ENCODE measurements at regions of chr17 and their contacts with region 1.

Region 1: GRCh38 chr17:69117855-69118784 is 23.6 kb downstream of the ABCA6 start:
- DNase-seq: peak; percentile 47
- ATAC-seq: peak; percentile 60
- H3K4me3 ChIP-seq: peak overlapping the region; percentile 27
- H3K27ac ChIP-seq: peak overlapping the region; percentile 93
- H3K4me1 ChIP-seq: peaks cover 22% of the 10 kb centered on the region
- H3K27me3 ChIP-seq: no peaks in the 10 kb centered on the region
- CTCF ChIP-seq: no peak
- EP300 ChIP-seq: peak; percentile 49 to 53; a peak in 3 of 4 replicates
- POLR2A ChIP-seq: no peak
- RAD21 ChIP-seq: no peak

Region 2: DNA sequence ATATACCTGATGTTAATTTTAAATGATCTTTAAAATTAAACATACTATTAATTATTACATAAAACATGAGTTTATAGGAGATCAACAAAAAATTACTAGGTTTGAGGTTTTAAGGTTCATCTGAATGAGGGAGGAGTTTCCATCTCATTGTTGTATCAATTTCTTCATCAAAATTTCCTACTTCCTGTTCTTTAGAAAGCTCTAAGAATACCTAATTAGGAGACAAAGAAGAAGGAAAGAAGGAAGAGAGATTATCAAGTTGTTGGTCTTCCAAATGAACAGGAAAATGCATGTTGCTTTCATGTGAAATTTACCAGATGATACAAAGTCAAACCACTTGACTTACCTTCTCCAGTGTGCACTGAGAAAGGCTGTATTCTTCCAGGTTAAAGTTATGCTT is 39.3 kb before region 1 on chr17:
- CTCF ChIA-PET with region 1: no interaction called
- POLR2A ChIA-PET with region 1: no interaction called
- RAD21 ChIA-PET with region 1: no interaction called
- SMC1A ChIA-PET with region 1: no interaction called
- in situ Hi-C with region 1: no loop called
- intact Hi-C with region 1: no loop called
- DNase-seq: no peak
- ATAC-seq: no peak
- H3K4me3 ChIP-seq: no peak overlapping the region
- H3K27ac ChIP-seq: no peak overlapping the region
- H3K4me1 ChIP-seq: no peaks in the 10 kb centered on the region
- H3K27me3 ChIP-seq: no peaks in the 10 kb centered on the region
- CTCF ChIP-seq: no peak
- EP300 ChIP-seq: no peak
- POLR2A ChIP-seq: no peak
- RAD21 ChIP-seq: no peak

Region 3: GRCh38 chr17:69130627-69131296 is 12.6 kb after region 1 on chr17:
- CTCF ChIA-PET with region 1: interaction called, 3 read pairs
- POLR2A ChIA-PET with region 1: no interaction called
- RAD21 ChIA-PET with region 1: no interaction called
- SMC1A ChIA-PET with region 1: interaction called, 10 read pairs
- in situ Hi-C with region 1: no loop called
- intact Hi-C with region 1: no loop called
- DNase-seq: no peak
- ATAC-seq: no peak
- H3K4me3 ChIP-seq: no peak overlapping the region
- H3K27ac ChIP-seq: no peak overlapping the region
- H3K4me1 ChIP-seq: no peaks in the 10 kb centered on the region
- H3K27me3 ChIP-seq: no peaks in the 10 kb centered on the region
- CTCF ChIP-seq: no peak
- EP300 ChIP-seq: no peak
- POLR2A ChIP-seq: no peak
- RAD21 ChIP-seq: no peak

Region 4: DNA sequence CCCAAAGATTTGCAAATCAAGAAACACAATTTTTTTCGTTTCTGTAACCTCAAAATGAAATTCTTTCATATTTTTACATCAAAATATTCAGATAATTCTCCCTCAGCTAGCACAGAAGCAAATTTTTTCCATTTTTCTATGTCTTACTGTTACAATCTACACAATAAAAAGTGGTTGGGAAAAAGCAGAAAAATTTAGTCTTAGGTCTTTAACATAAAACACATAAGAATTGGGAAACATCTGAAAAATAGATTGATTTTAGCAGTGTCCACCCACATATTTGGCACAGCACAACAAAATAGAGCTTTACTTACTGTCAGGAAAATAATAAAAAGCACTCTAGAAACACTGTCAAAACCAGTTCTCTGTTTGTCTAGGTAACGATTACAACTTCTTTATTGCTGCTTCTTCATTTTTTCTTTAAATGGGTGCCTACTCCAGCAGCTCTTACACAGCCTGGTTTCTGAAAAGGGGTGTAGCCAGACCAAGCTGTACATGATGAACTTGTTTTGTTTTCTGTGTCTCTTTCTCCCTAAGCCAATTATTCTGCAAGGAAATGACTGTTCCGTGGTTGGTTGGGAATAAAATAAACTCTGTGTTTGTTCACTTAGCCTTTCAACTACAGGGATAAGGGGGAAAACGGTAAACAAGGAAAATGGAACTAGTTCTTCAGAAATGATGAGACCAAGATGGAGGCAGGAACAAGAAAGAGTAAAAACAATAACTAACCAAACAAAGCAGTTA is 23.5 kb after region 1 on chr17 and contains the start of gene ABCA6:
- CTCF ChIA-PET with region 1: no interaction called
- POLR2A ChIA-PET with region 1: no interaction called
- RAD21 ChIA-PET with region 1: no interaction called
- SMC1A ChIA-PET with region 1: no interaction called
- in situ Hi-C with region 1: no loop called
- intact Hi-C with region 1: no loop called
- DNase-seq: no peak
- ATAC-seq: no peak
- H3K4me3 ChIP-seq: no peak within 1 kb of the TSS
- H3K27ac ChIP-seq: no peak within 1 kb of the TSS
- H3K4me1 ChIP-seq: no peaks in the 10 kb centered on the region
- H3K27me3 ChIP-seq: no peaks in the 10 kb centered on the region
- CTCF ChIP-seq: no peak
- EP300 ChIP-seq: no peak
- POLR2A ChIP-seq: no peak
- RAD21 ChIP-seq: no peak
- polyA plus RNA-seq, gene ABCA6: 9.0 to 10.1 TPM

Region 5: DNA sequence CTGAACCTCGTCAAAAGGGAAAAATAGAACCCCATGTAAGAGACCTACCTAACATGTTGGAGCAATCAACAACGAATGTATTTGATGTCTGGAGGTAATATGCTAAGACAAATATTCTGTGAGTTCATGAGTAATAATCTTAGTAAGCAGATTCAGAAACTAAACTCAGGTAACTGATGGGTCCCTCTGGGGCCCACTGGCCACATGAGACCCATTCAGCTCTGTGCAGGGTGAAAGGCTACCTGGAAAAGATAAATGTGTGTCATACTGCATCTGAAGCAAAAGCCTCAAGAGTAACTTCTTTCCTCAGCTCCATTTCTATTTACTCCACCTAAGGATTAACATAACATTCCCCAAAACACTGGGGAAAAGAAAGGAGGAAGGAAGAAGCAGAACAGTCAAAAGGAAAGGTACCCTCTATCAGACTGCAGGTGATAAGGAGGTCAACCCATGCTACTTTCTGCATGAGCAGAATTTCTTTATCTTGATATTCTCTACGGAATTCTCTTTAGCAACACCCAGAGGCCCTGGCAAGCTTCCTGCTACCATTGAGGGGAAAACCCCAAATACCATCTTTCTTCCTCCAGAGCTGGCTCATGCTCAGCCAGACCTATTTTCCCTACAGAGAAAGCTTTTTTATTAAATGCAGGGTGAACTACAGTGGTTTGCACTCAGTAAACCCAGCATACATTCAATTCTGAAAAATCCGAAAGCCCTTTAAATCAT is 61.3 kb after region 1 on chr17:
- CTCF ChIA-PET with region 1: interaction called, 3 read pairs
- POLR2A ChIA-PET with region 1: interaction called, 4 read pairs
- RAD21 ChIA-PET with region 1: interaction called, 4 read pairs
- SMC1A ChIA-PET with region 1: interaction called, 12 read pairs
- in situ Hi-C with region 1: no loop called
- intact Hi-C with region 1: no loop called
- DNase-seq: no peak
- ATAC-seq: peak; percentile 78
- H3K4me3 ChIP-seq: no peak overlapping the region
- H3K27ac ChIP-seq: no peak overlapping the region
- H3K4me1 ChIP-seq: no peaks in the 10 kb centered on the region
- H3K27me3 ChIP-seq: no peaks in the 10 kb centered on the region
- CTCF ChIP-seq: no peak
- EP300 ChIP-seq: no peak
- POLR2A ChIP-seq: no peak
- RAD21 ChIP-seq: no peak

Region 6: DNA sequence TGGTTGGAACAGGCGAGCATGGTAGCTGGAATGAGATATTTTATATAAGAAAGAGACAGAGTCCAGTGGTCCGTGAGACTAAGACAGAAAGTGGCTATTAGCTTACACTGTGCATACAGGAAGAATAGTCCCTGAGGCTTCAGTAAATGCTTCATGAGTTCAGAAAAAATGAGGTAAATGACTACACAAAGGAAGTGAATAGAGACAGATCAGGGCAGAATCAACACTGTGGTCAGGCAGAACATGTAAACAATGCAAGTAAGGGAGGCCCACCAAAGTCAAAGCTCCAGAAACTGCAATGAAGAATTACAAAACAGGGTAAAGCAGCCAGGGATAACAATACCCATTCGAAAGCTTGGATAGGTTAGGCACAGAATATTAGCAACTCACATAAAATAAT is 105.7 kb after region 1 on chr17:
- CTCF ChIA-PET with region 1: no interaction called
- POLR2A ChIA-PET with region 1: interaction called, 3 read pairs
- RAD21 ChIA-PET with region 1: interaction called, 8 read pairs
- SMC1A ChIA-PET with region 1: interaction called, 8 read pairs
- in situ Hi-C with region 1: no loop called
- intact Hi-C with region 1: loop called (anchors 5 kb)
- DNase-seq: peak; percentile 33
- ATAC-seq: peak; percentile 95
- H3K4me3 ChIP-seq: no peak overlapping the region
- H3K27ac ChIP-seq: no peak overlapping the region
- H3K4me1 ChIP-seq: peaks cover 8% of the 10 kb centered on the region
- H3K27me3 ChIP-seq: no peaks in the 10 kb centered on the region
- CTCF ChIP-seq: no peak
- EP300 ChIP-seq: no peak
- POLR2A ChIP-seq: no peak
- RAD21 ChIP-seq: no peak

Measured in GM12878 (cell line).